Psoas muscle (tissue), 8 donors: ENCODE measurements at regions of chr3 and their contacts with region 1.

Region 1: DNA sequence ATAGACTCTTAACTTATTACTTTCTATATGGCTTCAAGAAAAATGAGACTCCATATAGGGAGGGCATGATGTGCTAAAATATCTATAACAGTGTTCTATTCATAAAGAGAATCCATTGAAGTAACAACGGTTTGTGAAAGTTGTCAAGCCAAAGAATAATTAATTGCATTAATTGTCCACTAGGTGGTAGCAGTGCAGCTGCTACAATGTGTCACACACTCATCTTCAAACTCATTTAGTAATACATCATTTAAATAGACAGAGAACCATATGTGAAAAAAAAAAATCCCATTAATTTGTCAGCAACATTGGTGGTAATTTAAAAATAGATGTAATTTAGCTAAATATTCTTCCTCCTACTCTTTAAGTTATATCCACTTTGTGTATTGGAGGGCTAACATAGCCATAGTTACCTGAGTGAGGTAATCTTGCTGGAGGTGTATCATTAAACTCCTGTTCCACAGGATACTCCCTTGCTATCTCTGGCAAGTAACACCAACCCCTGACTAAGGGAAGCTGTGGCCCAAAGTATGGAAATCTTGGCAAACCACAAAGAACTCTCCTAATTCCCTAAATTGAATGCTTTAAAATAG is 3.7 kb upstream of the CPA3 start:
- DNase-seq: no peak
- ATAC-seq: peak in 3 of 4 donors; percentile 73 to 91 (median 81)
- H3K4me3 ChIP-seq: no peak overlapping the region
- H3K27ac ChIP-seq: no peak overlapping the region
- H3K4me1 ChIP-seq: peaks cover 16% of the 10 kb centered on the region
- H3K27me3 ChIP-seq: no peaks in the 10 kb centered on the region
- CTCF ChIP-seq: peak; percentile 78

Region 2: GRCh38 chr3:149152420-149152819 is 291.0 kb after region 1 on chr3:
- intact Hi-C with region 1: no loop called
- DNase-seq: no peak
- ATAC-seq: peak in 3 of 4 donors; percentile 27 to 73 (median 69)
- H3K4me3 ChIP-seq: no peak overlapping the region
- H3K27ac ChIP-seq: peak overlapping the region; percentile 59
- H3K4me1 ChIP-seq: no peaks in the 10 kb centered on the region
- H3K27me3 ChIP-seq: no peaks in the 10 kb centered on the region
- CTCF ChIP-seq: no peak

Region 3: DNA sequence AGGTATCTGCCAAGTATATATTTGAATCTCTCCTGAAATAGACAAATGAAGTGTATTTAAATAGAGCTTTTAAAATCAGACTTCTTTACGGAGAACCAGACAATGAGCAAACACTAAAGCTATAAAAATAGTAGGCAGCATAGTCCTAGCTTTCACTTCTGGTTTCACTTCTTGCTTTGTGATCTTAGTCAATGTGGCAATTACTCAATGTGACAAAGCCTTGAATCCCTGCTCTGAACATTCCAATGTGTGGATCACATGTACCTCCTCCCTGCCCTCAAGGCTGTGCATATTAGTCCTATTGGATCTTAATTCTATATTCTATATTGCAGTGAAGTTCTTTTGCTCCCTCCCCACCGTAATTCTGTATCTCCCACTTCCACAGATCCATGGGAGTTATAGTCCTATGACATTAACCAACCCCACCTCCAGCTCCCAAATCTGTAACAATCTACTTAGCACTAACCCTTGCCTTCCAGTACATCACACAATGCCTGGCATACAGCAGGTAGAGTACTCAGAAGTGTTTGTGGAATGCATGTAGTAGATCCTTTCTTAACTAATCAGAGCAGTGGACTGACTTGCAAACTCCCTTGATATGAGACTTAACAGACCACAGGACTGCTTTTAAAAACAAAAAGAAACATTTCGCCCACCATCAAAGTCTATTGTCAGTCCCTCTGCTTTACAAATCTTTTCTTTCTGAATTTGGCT is 384.5 kb after region 1 on chr3:
- intact Hi-C with region 1: loop called in 1 of 2 experiments (anchors 10 kb)
- DNase-seq: no peak
- ATAC-seq: peak; percentile 36 to 88 (median 75)
- H3K4me3 ChIP-seq: peak overlapping the region; percentile 23
- H3K27ac ChIP-seq: peak overlapping the region; percentile 31
- H3K4me1 ChIP-seq: peaks cover 6% of the 10 kb centered on the region
- H3K27me3 ChIP-seq: no peaks in the 10 kb centered on the region
- CTCF ChIP-seq: no peak

Region 4: GRCh38 chr3:149273096-149273751 is 411.9 kb after region 1 on chr3:
- intact Hi-C with region 1: loop called (anchors 5 to 10 kb)
- DNase-seq: no peak
- ATAC-seq: peak; percentile 80 to 96 (median 90)
- H3K4me3 ChIP-seq: no peak overlapping the region
- H3K27ac ChIP-seq: no peak overlapping the region
- H3K4me1 ChIP-seq: peaks cover 3% of the 10 kb centered on the region
- H3K27me3 ChIP-seq: no peaks in the 10 kb centered on the region
- CTCF ChIP-seq: peak; percentile 96